Mammary epithelial cell (primary cell): ENCODE measurements at regions of chr4 and their contacts with region 1.

Region 1: DNA sequence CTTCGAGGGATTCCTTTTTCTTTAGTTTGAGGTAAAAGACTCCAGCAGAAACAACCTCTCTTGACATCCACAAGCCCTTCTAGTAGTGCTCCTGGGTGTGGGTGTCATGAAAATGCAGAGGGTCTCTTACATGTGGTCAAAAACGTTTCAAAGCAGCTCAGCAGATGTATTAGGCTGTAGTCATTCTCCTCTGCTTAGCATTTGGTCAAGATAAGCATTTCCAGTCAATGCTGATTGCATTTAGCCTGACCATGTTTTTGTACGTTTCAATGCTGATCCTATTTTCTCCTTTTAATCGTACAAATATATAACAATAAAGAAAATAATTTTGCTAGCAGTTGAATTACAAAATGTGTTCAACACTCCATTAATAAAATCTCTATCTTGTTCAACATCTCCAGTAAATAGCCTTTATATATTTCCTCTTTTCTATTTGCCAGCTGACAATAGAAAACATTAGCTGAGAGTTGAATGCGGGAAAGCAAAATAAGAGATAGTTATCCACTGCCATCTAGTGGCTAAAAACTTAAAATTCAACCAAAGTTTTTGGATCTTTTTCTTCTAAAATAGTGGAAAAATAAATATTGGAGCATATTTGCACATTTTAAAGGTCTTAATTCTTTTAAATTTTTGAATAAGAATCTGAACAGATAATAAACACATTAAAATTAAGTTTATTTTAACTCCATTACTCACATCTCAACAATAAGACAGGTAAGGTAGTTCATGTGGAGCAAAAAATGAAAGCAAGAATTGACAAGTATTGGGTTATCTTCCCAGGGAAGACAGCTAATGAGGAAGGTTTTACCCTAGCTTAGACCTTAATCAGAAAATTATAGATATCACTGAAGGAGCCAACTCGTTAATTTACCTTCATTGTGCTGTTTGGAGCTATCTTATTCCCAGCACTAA is 15.2 kb upstream of the PACRGL start:
- DNase-seq: no peak
- H3K4me3 ChIP-seq: no peak overlapping the region
- H3K27ac ChIP-seq: no peak overlapping the region
- H3K4me1 ChIP-seq: no peaks in the 10 kb centered on the region
- H3K27me3 ChIP-seq: no peaks in the 10 kb centered on the region
- CTCF ChIP-seq: peak; percentile 41 to 54

Region 2: DNA sequence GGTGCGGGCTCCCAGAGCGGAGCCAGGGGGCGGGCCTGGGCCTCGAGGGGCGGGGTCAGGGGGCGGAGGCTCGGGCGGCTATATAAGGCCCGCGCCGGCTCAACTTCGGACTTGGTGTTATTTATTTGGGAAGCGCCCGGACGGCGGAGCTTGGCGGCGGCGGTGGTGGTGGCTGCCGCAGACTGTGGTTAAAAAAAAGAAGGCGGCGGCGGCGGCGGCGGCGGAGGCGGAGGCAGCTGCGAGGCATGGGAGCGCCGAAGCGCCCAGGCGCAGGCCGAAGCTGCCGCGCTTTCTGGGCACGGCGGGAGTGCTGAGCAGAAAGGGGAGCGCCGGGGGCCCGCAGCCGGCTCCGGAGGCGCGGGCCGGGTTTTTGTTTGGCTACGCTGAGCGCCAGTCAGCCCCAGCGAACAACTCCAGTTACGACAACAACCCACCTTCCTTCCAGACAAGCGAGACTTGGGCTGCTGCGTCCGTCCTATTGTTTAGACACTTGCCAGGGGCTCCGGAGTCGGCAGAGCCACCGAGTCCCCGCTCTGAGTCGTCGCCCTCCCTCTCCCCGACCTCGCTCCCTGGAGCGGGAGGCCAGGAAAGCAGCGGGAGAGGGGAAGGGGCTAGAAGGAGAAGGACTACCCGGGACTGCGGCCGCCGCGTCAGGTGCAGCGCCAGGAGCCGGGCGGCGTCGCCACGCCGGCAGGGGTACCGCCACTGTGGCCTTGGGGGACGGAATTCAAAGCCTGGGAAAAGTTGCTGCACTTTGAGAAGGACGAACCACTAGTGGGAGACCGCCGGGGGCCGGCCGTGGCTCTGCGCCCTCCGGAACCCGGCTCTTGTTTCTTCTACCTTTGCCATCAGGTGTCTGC is 433.1 kb before region 1 on chr4 and contains the start of gene SLIT2:
- CTCF ChIA-PET with region 1: no interaction called
- dilution Hi-C with region 1: no loop called
- in situ Hi-C with region 1: no loop called
- intact Hi-C with region 1: loop called (anchors 1 kb)
- DNase-seq: peak; percentile 55
- H3K4me3 ChIP-seq: peak within 1 kb of the TSS; percentile 62 to 68 (median 65)
- H3K27ac ChIP-seq: no peak within 1 kb of the TSS
- H3K4me1 ChIP-seq: peaks cover 38% of the 10 kb centered on the region
- H3K27me3 ChIP-seq: no peaks in the 10 kb centered on the region
- CTCF ChIP-seq: no peak
- total RNA-seq, gene SLIT2: 0.17 to 4.2 TPM

Region 3: GRCh38 chr4:20313237-20314030 is 371.7 kb before region 1 on chr4:
- CTCF ChIA-PET with region 1: no interaction called
- dilution Hi-C with region 1: no loop called
- in situ Hi-C with region 1: loop called in 1 of 2 experiments (anchors 25 kb)
- intact Hi-C with region 1: loop called (anchors 10 kb)
- DNase-seq: no peak
- H3K4me3 ChIP-seq: no peak overlapping the region
- H3K27ac ChIP-seq: no peak overlapping the region
- H3K4me1 ChIP-seq: no peaks in the 10 kb centered on the region
- H3K27me3 ChIP-seq: no peaks in the 10 kb centered on the region
- CTCF ChIP-seq: peak in 1 of 2 donors; percentile 8

Region 4: DNA sequence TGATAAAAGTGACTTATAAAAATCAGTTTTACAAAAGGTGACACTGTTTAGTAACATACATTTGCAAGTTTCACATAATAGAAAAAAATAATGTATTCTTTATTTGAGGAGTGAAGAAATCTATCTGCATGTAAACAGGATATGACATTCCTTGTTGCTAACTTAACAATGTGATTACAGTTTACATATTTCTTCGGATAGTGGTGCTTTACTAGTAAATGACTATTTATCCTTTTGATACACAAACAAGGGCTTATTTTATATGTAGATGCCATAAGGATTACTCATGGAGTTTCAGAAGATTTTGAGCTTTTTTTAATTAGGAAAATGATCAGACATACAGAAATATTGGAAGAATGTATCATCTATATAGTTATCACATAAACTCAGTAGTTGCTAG is 306.9 kb before region 1 on chr4:
- CTCF ChIA-PET with region 1: no interaction called
- dilution Hi-C with region 1: no loop called
- in situ Hi-C with region 1: no loop called
- intact Hi-C with region 1: no loop called
- DNase-seq: no peak
- H3K4me3 ChIP-seq: no peak overlapping the region
- H3K27ac ChIP-seq: no peak overlapping the region
- H3K4me1 ChIP-seq: no peaks in the 10 kb centered on the region
- H3K27me3 ChIP-seq: no peaks in the 10 kb centered on the region
- CTCF ChIP-seq: no peak

Region 5: GRCh38 chr4:20544645-20545044 is 140.5 kb before region 1 on chr4:
- CTCF ChIA-PET with region 1: no interaction called
- dilution Hi-C with region 1: no loop called
- in situ Hi-C with region 1: loop called in 1 of 2 experiments (anchors 25 kb)
- intact Hi-C with region 1: loop called (anchors 1 kb)
- DNase-seq: peak; percentile 13
- H3K4me3 ChIP-seq: no peak overlapping the region
- H3K27ac ChIP-seq: no peak overlapping the region
- H3K4me1 ChIP-seq: no peaks in the 10 kb centered on the region
- H3K27me3 ChIP-seq: no peaks in the 10 kb centered on the region
- CTCF ChIP-seq: peak; percentile 47 to 70

Region 6: DNA sequence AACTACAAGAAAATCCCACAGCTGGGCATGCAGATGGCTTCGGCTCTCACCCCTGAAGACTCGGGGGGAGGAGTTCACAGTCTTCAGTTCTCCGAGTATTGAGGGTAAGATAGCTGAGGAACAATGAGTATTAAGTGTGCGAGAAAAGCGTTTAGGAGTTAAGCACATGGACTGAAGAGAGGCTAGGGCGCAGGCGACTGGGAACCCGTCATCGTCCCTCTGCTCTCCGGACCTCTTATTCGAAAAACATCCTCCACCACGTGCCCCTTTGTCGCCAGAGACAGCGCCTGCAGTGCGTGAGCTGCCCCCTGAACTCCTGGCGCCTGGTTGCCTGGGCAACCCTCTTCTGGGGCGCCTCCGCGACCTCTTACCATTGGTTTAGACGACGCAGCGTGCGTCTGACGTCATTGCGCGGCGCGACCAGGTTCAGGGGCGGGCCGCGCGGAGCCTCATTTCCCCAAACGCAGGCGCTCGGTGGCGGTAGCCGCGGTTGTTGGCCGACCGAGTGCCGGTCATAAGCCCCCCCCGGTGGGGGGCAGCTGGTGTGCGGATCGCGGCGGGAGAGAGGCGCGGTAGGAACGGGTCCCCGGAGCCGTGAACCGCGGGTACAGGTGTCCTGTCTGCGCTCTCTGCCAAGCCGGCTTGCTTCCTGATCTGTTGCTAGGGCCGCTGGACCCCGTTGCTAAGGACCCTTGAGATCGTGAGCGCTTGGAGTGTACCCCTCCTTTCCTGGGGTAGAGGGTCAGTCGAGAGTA is 15.1 kb after region 1 on chr4 and contains the start of gene PACRGL:
- CTCF ChIA-PET with region 1: interaction called, 12 read pairs
- dilution Hi-C with region 1: no loop called
- in situ Hi-C with region 1: no loop called
- intact Hi-C with region 1: no loop called
- DNase-seq: peak; percentile 88
- H3K4me3 ChIP-seq: peak within 1 kb of the TSS; percentile 75 to 98 (median 92)
- H3K27ac ChIP-seq: peak within 1 kb of the TSS; percentile 79
- H3K4me1 ChIP-seq: peaks cover 11% of the 10 kb centered on the region
- H3K27me3 ChIP-seq: no peaks in the 10 kb centered on the region
- CTCF ChIP-seq: no peak
- total RNA-seq, gene PACRGL: 16.0 to 29.2 TPM

Region 7: DNA sequence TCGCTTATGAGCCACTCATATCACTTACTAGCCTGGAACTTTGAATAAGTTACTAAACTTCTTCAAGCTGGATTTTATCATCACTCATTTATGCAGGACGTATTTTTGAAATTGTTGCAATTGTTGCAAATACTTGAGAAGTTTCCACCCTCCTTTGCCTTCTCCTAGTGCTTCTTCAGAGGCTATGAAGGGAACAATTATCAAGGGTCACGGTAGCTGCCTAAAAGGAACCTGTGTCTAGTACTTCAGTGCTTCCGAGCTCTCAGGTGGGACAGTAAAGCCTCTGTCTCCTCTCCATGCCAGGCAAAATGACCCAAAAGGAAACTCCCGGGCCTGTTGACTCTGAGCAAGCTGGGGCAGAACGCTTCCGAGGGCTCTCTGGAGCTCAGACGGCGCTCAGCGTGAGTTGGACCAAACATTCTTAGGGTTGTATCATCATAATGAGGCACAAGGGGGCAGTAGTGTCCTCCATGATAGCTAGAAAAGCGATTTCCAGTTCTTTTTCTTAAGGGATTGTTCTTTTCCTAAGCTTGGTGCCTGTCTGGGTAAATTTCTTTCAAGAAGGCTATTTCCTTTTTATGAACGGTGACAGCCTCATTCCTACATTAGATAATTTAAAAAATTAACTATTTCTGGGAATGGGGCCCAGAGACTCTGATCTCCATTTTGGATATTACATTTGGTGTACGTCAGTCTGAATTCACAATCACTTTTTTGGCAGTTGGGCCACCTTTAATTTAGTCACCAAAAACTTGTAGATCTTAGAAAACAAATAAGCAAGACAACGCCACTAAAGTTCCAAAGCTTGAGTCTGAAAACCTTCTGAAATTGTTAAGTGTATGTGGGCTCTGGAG is 88.3 kb after region 1 on chr4:
- CTCF ChIA-PET with region 1: no interaction called
- dilution Hi-C with region 1: no loop called
- in situ Hi-C with region 1: no loop called
- intact Hi-C with region 1: no loop called
- DNase-seq: peak; percentile 53
- H3K4me3 ChIP-seq: no peak overlapping the region
- H3K27ac ChIP-seq: no peak overlapping the region
- H3K4me1 ChIP-seq: no peaks in the 10 kb centered on the region
- H3K27me3 ChIP-seq: no peaks in the 10 kb centered on the region
- CTCF ChIP-seq: peak; percentile 69 to 76